H1 (cell line): ENCODE measurements at regions of chr20 and their contacts with region 1.

Region 1: DNA sequence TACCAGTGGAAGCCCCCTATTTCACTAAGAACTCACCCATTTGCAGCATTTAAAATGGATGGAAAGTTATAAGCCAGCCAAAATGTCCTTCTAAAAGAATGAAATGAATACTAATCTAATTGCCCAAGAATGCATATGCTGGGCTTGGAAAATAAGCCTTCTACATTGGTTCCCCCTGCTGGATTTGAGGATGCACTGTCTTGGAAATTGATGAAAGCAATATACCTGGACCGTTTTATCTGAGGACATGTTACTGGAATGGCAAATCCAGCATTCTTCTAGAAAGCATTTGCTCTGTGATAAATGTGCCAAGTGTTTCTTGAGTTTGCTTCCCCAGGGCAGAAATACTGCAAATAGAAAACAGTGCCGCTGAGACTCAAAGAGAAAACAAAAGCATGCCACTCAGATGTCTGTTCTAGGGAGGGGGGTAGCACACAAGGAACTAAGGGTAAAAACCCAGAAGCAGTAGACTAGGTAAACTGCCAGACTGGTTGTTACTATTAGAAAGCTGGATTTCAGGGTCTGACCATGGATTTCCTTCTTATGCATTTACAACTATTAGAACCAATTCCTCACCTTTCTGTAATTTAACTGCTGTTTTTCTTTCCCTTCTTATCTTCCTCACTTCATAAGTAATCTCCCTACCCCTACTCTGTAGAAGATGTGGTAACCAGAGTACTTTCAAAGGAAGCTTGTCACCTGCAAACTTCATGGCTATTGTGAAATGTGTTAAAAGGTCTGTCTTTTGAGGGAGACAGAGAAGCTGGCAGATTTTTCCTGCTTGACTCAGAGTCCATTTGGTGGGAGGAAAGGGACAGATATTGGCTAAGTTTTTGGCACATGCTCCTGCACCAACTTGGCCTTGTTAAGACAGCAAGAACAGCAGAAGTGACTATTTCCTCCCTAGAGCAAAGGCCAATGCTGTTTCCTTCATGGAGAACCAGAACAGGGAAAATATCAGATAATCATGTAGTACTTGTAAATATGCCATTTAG is 642.6 kb downstream of the KIF16B start:
- DNase-seq: no peak
- H3K4me3 ChIP-seq: no peak overlapping the region
- H3K27ac ChIP-seq: no peak overlapping the region
- H3K4me1 ChIP-seq: no peaks in the 10 kb centered on the region
- H3K27me3 ChIP-seq: no peaks in the 10 kb centered on the region
- CTCF ChIP-seq: peak in 2 of 3 experiments; percentile 53 to 69; a peak in 2 of 4 replicates
- EP300 ChIP-seq: no peak
- POLR2A ChIP-seq: no peak
- RAD21 ChIP-seq: peak; percentile 78 to 84

Region 2: GRCh38 chr20:15491575-15491974 is 439.0 kb before region 1 on chr20:
- CTCF ChIA-PET with region 1: interaction called, 10 read pairs
- POLR2A ChIA-PET with region 1: no interaction called
- DNase-seq: peak; percentile 10 to 62
- H3K4me3 ChIP-seq: no peak overlapping the region
- H3K27ac ChIP-seq: no peak overlapping the region
- H3K4me1 ChIP-seq: peaks cover 0 to 9% (median 2%) of the 10 kb centered on the region in 4 experiments; a peak in 2 of 7 replicates
- H3K27me3 ChIP-seq: no peaks in the 10 kb centered on the region
- CTCF ChIP-seq: peak; percentile 62 to 80 (median 72)
- EP300 ChIP-seq: no peak
- POLR2A ChIP-seq: no peak
- RAD21 ChIP-seq: peak; percentile 81 to 88

Region 3: GRCh38 chr20:15708984-15709598 is 221.5 kb before region 1 on chr20:
- CTCF ChIA-PET with region 1: interaction called, 30 read pairs
- POLR2A ChIA-PET with region 1: no interaction called
- DNase-seq: peak; percentile 34 to 97
- H3K4me3 ChIP-seq: no peak overlapping the region
- H3K27ac ChIP-seq: no peak overlapping the region
- H3K4me1 ChIP-seq: no peaks in the 10 kb centered on the region
- H3K27me3 ChIP-seq: no peaks in the 10 kb centered on the region
- CTCF ChIP-seq: peak; percentile 81 to 92 (median 89)
- EP300 ChIP-seq: no peak
- POLR2A ChIP-seq: no peak
- RAD21 ChIP-seq: peak; percentile 88 to 92

Region 4: GRCh38 chr20:15913391-15914025 is 17.1 kb before region 1 on chr20:
- CTCF ChIA-PET with region 1: interaction called, 11 read pairs
- POLR2A ChIA-PET with region 1: no interaction called
- DNase-seq: no peak
- H3K4me3 ChIP-seq: no peak overlapping the region
- H3K27ac ChIP-seq: no peak overlapping the region
- H3K4me1 ChIP-seq: peaks cover 0 to 3% (median 0%) of the 10 kb centered on the region in 4 experiments; a peak in 3 of 7 replicates
- H3K27me3 ChIP-seq: no peaks in the 10 kb centered on the region
- CTCF ChIP-seq: no peak
- EP300 ChIP-seq: no peak
- POLR2A ChIP-seq: no peak
- RAD21 ChIP-seq: no peak

Region 5: DNA sequence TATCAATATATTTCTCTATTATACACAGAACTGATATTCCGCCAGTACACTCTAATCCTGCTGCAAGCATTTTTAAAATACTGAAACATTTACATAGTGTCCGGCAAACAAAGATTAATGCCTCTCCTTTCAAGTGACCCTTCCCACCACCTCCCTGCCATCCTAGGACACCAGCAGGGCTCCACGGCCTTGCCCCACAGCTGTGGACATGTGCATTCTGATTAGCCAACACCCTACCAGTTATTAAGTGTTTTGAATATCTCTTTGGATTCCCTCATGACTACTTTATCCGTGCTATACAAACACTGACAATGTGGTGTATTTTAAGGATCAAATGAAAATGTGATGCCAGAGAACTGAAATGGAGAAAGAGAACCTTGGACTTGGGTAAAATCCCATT is 27.5 kb after region 1 on chr20:
- CTCF ChIA-PET with region 1: no interaction called
- POLR2A ChIA-PET with region 1: no interaction called
- DNase-seq: no peak
- H3K4me3 ChIP-seq: no peak overlapping the region
- H3K27ac ChIP-seq: no peak overlapping the region
- H3K4me1 ChIP-seq: no peaks in the 10 kb centered on the region
- H3K27me3 ChIP-seq: no peaks in the 10 kb centered on the region
- CTCF ChIP-seq: no peak
- EP300 ChIP-seq: no peak
- POLR2A ChIP-seq: no peak
- RAD21 ChIP-seq: no peak

Region 6: DNA sequence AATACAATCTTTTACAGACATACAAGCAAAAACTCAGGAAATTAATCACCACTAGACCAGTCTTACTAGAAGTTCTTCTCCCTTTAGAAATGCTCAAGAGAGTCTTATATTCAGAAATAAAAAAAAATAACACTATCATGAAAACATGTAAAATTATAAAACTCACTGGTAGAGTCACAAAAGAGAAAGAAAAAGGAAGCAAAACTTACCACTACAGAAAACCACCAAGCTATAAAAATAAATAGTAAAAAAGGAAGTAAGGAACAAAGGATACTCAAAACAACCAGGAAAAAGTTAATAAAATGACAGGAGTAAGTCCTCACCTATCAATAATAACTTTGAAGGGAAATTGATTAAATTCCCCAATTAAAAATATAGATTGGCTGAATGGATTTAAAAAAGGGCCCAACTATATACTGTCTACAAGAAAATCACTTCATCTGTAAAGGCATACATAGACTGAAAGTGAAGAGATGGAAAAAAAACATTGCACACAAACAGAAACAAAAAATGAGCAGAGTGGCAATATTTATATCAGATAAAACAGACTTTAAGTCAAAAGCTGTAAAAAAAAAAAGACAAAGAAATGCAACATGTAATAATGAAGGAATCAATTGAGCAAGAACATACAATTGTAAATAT is 153.2 kb after region 1 on chr20:
- CTCF ChIA-PET with region 1: no interaction called
- POLR2A ChIA-PET with region 1: no interaction called
- DNase-seq: no peak
- H3K4me3 ChIP-seq: no peak overlapping the region
- H3K27ac ChIP-seq: no peak overlapping the region
- H3K4me1 ChIP-seq: no peaks in the 10 kb centered on the region
- H3K27me3 ChIP-seq: no peaks in the 10 kb centered on the region
- CTCF ChIP-seq: no peak
- EP300 ChIP-seq: no peak
- POLR2A ChIP-seq: no peak
- RAD21 ChIP-seq: no peak